ENCODE measurements at regions of chr15 and their contacts with region 1.

Region 1: DNA sequence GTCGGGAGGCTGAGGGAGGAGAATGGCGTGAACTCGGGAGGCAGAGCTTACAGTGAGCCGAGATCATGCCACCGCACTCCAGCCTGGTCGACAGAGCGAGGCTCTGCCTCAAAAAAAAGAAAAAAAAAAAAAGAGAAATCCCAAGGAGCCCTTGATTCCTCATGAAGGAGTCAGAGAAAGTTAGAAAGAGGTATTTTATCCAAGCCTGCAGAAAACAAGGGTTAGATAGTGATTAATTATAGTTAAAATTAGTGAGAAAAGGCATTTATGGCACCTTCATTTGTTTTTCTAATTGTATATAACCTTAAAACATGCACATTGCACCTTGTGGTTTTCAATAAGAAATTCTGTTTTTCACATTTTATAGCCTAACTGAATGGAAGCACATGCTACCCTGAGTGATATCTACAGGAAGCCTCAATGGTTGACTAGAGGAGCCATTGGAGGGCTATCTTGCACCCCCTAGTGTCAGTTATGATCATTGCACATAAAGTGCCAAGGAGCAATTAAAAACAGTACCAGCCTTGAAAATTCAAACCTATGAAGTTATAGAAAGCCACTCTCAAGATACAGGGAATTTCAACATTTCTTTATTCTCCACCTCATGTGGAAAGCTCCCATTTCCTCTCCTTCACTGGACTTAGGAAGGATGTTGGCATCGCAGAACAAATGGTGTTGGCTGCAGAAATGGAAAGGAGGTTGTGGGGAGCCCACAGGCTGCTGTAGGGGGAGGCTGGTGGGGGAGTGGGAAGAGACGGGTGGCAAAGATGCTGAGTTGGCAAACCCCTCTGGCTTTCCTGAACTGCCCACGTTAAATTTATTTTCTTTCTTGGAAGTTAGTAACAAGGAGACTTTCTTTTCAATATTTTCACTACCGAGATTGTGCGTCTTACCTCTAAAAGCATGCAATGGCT is 48.5 kb downstream of the ITGA11 start:
- DNase-seq: no peak
- H3K4me3 ChIP-seq: no peak overlapping the region
- CTCF ChIP-seq: peak; percentile 50

Region 2: DNA sequence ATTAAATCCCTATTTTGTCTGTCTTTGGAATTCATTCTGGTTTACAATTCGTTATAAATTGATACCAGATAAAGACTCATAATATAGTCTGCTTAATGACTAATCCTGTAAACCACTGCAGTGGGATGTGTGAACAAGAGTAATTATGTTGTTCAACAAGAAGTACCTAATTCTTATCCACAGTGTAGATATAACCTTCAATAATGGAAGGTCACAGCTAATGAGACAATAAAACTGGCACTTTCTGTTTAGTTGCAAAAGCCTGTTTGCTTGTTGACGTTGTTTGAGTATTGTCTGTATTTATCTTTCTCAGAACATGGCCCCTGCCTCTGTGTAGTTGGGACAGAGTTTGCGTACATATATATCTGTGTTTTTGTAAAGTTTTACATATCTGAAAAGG is 302.6 kb before region 1 on chr15:
- CTCF ChIA-PET with region 1: no interaction called
- POLR2A ChIA-PET with region 1: no interaction called
- DNase-seq: no peak
- H3K4me3 ChIP-seq: no peak overlapping the region
- CTCF ChIP-seq: no peak

Region 3: DNA sequence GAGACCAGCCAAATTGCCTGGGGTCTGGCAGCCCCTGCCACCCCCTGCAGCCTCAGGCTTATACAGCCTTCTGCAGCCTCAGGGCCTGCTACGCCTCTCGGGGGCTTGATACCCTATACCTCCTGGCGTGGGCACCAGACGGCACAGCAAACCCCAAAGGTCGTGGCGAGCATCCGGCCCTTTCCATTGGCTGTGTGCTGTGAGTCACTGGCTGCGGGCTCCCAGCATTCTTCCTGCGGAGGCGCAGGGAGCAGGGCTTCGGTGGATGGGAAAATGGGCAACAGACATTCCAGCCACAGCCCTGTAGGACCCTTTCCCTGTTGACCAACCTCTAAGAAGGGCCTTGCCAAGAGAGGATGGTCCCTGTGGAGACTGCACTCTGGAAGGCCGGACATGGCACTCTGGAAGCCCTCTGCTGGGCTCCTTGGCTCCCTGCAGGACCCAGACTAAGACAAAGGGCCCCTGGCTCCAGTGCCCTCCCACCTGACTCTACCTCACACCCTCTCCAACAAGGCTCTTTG is 11.1 kb before region 1 on chr15:
- CTCF ChIA-PET with region 1: interaction called, 11 read pairs
- POLR2A ChIA-PET with region 1: interaction called, 3 read pairs
- DNase-seq: no peak
- H3K4me3 ChIP-seq: no peak overlapping the region
- CTCF ChIP-seq: peak; percentile 45

Measured in AG04449 (cell line).